Psoas muscle (tissue), 8 donors: ENCODE measurements at regions of chr1 and their contacts with region 1.

Region 1: GRCh38 chr1:99180343-99180808 is 83.9 kb upstream of the PLPPR4 start:
- DNase-seq: peak in 1 of 2 donors; percentile 34
- ATAC-seq: peak; percentile 75 to 99 (median 92)
- H3K4me3 ChIP-seq: no peak overlapping the region
- H3K27ac ChIP-seq: no peak overlapping the region
- H3K4me1 ChIP-seq: no peaks in the 10 kb centered on the region
- H3K27me3 ChIP-seq: no peaks in the 10 kb centered on the region
- CTCF ChIP-seq: peak; percentile 89

Region 2: GRCh38 chr1:99365141-99365540 is 184.8 kb after region 1 on chr1:
- intact Hi-C with region 1: no loop called
- DNase-seq: no peak
- ATAC-seq: no peak
- H3K4me3 ChIP-seq: no peak overlapping the region
- H3K27ac ChIP-seq: no peak overlapping the region
- H3K4me1 ChIP-seq: no peaks in the 10 kb centered on the region
- H3K27me3 ChIP-seq: no peaks in the 10 kb centered on the region
- CTCF ChIP-seq: no peak

Region 3: DNA sequence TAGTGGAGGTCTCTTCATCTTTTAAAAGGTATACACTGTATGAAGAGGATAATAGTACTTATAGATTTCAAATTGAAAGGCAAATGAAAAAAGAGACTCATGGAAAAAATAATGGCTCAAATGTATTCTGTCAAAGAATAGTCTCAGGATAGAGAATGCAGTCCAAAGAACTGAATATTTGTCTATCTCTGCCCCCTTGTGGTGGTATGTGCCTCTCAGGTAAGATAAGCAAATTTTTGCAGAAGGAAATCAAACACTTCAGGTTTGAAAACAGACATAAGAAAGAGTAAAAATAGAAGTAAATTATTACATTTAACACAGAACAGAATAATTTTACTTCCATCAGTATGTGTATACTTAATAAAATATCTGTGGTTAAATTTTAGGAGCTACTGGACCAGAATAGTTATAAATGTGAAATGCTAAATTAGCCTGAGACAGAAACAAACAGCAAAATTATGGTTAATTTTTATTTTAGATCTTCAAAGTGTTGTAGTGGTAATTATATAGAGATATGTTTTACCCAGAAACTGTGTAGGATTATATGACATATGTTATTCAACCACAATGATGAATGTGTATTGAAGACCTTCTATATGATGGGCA is 301.1 kb after region 1 on chr1:
- intact Hi-C with region 1: loop called (anchors 2 to 5 kb)
- DNase-seq: no peak
- ATAC-seq: peak; percentile 57 to 71 (median 60)
- H3K4me3 ChIP-seq: no peak overlapping the region
- H3K27ac ChIP-seq: no peak overlapping the region
- H3K4me1 ChIP-seq: no peaks in the 10 kb centered on the region
- H3K27me3 ChIP-seq: no peaks in the 10 kb centered on the region
- CTCF ChIP-seq: peak; percentile 79

Region 4: DNA sequence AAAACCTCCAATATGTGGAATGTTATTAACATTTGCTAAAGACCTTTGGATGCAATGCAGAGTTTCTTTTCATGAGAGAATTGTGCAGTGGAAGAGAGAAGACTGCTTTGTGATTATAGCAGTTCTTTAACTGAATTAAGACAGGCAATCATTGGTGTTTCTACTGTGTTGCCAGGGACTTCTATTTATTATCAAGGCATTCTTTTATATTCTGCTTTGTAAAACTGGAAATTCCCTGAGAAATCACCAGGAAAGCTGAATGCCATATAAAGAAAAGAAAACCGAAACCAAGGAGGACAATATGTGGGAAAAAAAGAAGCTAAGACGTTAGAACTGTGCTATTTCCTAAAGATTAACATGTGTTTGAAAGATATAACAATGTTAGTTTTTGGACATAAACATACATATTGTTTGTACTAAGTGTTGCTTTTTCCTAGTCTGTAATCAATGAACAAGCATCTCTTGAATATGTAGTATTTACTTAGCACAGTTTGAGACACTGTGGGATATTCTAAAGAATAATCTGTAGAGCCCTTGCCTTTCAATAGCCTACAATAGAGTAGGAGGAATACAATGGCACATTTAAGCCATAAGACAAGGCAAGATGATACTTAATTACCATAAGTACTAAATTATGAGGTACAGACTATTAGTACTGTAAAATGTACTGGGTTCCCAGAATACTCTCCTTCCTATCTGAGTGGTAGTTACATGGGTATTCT is 1667.1 kb after region 1 on chr1:
- intact Hi-C with region 1: no loop called
- DNase-seq: no peak
- ATAC-seq: no peak
- H3K4me3 ChIP-seq: peak overlapping the region; percentile 34
- H3K27ac ChIP-seq: no peak overlapping the region
- H3K4me1 ChIP-seq: no peaks in the 10 kb centered on the region
- H3K27me3 ChIP-seq: no peaks in the 10 kb centered on the region
- CTCF ChIP-seq: no peak